SK-N-SH (cell line): ENCODE measurements at regions of chr11 and their contacts with region 1.

Region 1: DNA sequence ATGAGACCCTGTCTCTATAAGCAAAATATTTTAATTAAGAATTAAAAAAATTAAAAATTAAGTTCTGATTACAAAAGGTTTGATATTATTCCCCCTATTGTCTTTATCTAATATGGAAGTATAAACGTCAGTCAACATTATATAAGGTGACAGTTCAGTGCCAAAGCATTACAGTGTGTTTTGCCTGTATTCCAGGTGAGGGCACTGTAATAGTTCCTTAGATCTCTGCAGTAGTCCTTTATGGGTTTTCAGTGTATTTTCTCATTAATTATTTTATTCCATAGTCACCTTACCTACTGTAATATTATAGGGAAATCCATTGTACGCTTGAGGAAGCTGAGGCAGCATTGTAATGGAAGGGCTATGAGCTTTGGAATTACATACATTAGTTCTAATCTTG is 33.0 kb downstream of the FAR1 start:
- DNase-seq: no peak
- H3K4me3 ChIP-seq: no peak overlapping the region
- H3K27ac ChIP-seq: no peak overlapping the region
- H3K4me1 ChIP-seq: no peaks in the 10 kb centered on the region; a peak in 1 of 4 replicates
- H3K27me3 ChIP-seq: no peaks in the 10 kb centered on the region
- CTCF ChIP-seq: no peak
- EP300 ChIP-seq: no peak
- RAD21 ChIP-seq: no peak

Region 2: GRCh38 chr11:13647391-13647790 is 54.1 kb before region 1 on chr11:
- CTCF ChIA-PET with region 1: no interaction called
- POLR2A ChIA-PET with region 1: no interaction called
- DNase-seq: no peak
- H3K4me3 ChIP-seq: no peak overlapping the region
- H3K27ac ChIP-seq: no peak overlapping the region
- H3K4me1 ChIP-seq: no peaks in the 10 kb centered on the region
- H3K27me3 ChIP-seq: no peaks in the 10 kb centered on the region
- CTCF ChIP-seq: no peak
- EP300 ChIP-seq: no peak
- RAD21 ChIP-seq: no peak

Region 3: DNA sequence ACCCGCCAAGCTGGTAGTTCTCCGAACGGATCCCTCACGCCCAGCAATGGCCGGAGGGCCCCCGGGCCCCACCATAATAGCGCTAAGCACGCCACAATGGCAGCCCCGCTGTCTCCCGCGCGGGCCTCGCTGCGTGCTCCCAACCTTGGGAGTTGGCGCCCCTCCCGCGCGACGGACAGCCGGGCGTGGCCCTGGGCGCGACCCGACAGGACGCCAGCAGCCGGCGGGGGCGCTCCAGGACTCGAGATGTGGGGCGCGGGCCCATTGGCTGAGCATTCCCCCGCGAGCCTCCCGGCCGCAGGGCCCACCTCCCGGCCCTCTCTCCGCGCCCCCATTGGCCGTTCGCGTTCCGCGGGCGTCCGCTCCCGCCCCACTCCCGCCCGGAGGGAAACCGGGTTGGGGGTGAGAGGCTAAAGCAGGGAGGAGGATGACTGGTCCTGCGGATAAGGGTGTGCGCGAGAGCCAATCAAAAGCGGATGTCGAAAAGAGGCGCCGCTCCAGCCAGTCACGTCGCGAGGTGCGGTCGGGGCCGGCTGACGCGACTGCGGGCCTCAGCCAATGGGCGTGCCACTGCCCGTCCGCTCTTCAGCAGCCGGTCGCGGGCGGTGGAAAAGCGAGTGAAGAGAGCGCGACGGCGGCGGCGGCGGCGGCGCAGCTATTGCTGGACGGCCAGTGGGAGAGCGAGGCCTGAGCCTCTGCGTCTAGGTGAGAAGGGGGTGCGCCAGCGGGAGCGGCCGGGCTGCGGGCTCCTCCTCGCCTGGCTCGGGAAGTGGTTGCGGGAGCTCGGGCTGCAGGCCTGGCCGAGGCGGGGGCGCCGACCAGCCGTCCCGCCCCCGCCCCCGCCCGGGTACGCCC is 33.2 kb before region 1 on chr11 and contains the start of gene FAR1:
- CTCF ChIA-PET with region 1: no interaction called
- POLR2A ChIA-PET with region 1: no interaction called
- DNase-seq: peak; percentile 98
- H3K4me3 ChIP-seq: peak within 1 kb of the TSS; percentile 62 to 85
- H3K27ac ChIP-seq: peak within 1 kb of the TSS; percentile 63 to 76
- H3K4me1 ChIP-seq: peaks cover 6 to 11% of the 10 kb centered on the region in 2 experiments; a peak in 2 of 4 replicates
- H3K27me3 ChIP-seq: no peaks in the 10 kb centered on the region
- CTCF ChIP-seq: peak; percentile 54
- EP300 ChIP-seq: peak in 1 of 2 experiments; percentile 7; a peak in 2 of 4 replicates
- RAD21 ChIP-seq: peak; percentile 38; the same call in 1 of the 2 replicates
- polyA plus RNA-seq, gene FAR1: 29.0 and 38.8 TPM in 2 replicates

Region 4: DNA sequence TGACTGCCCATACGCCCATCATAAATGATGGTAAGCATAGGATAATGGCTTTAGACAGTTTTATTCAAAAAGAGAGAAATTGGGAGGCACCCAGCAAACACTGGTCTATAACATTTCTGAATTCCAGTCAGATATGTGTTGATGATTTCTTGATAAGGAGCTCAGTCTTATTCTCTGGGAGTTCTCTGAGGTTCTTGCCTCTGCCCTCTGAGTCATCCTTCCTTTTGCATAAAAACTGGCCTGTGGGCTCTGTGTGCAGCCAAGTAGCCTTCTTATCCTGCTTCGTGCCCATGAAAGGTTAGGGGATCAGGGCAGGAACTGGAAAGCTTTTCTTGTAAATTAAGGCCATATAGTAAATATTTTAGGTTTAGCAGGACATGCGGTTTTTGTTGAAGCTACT is 15.8 kb after region 1 on chr11:
- CTCF ChIA-PET with region 1: interaction called, 12 read pairs
- POLR2A ChIA-PET with region 1: no interaction called
- DNase-seq: no peak
- H3K4me3 ChIP-seq: no peak overlapping the region
- H3K27ac ChIP-seq: peak overlapping the region; percentile 58 to 64; a peak in 3 of 4 replicates
- H3K4me1 ChIP-seq: peaks cover 0 to 8% of the 10 kb centered on the region in 2 experiments; a peak in 1 of 4 replicates
- H3K27me3 ChIP-seq: no peaks in the 10 kb centered on the region
- CTCF ChIP-seq: no peak
- EP300 ChIP-seq: peak in 1 of 2 experiments; percentile 28; a peak in 1 of 4 replicates
- RAD21 ChIP-seq: no peak

Region 5: DNA sequence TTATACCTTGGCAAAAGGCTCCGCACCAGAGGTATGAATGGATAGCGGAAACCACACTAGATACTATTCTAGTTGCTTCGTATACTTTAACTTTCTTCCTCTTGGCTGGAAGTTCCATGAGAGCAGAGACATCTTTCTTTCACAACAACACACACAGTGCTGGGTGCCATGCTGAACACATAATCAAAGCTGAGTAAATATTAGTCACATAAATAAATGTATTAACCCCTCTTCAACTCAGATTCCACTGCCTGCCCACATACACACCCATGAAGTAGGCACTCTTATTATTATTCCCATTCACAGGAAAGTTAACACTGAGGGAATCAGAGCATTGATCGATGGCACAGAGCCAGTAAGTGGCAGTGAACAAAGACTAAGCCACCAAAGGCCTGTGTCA is 296.4 kb after region 1 on chr11:
- CTCF ChIA-PET with region 1: no interaction called
- POLR2A ChIA-PET with region 1: no interaction called
- DNase-seq: no peak
- H3K4me3 ChIP-seq: no peak overlapping the region
- H3K27ac ChIP-seq: no peak overlapping the region
- H3K4me1 ChIP-seq: no peaks in the 10 kb centered on the region
- H3K27me3 ChIP-seq: no peaks in the 10 kb centered on the region; the same call in 1 of the 2 replicates
- CTCF ChIP-seq: no peak
- EP300 ChIP-seq: no peak
- RAD21 ChIP-seq: no peak